A673 (cell line): ENCODE measurements at regions of chr4 and their contacts with region 1.

Region 1: DNA sequence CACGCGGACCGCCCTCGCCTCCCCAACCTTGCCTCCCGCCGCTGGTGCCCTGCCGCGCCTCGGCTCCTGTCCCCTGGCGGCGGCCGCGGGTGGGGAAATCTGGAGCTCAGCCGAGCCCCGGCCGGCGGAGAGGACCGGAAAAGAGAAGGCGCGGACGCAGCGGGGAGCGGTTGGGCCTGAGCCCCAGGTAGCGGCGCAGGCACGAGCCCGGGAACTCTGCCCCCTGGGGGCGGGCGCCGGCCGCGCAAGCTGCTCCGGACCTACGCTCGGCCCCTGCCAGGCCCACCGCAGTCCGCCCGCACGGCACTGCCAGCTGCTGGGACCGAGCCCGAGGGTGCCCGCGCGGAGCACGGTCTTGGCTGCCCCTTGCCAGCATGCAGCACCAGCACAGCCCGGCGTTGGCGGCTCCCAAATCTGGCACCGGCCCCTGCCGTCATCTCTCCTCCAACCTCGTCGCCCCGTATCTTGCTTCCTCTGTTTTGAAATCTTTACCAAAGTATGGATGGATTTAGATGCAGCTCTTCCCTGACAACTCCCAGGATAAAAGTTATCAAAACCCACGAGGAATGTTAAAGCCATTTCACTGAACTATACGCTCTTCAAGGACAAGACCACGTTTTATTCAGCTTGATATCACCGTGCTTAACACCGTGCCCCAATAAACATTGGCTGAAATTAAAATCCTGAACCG is at the start of gene PRSS12:
- DNase-seq: peak; percentile 85
- H3K4me3 ChIP-seq: peak within 1 kb of the TSS; percentile 53
- H3K27ac ChIP-seq: no peak within 1 kb of the TSS
- H3K4me1 ChIP-seq: no peaks in the 10 kb centered on the region
- H3K27me3 ChIP-seq: peaks cover 24% of the 10 kb centered on the region
- CTCF ChIP-seq: peak; percentile 67
- total RNA-seq, gene PRSS12: 3.1 and 4.7 TPM in 2 replicates

Region 2: GRCh38 chr4:118076958-118077766 is 275.8 kb before region 1 on chr4:
- CTCF ChIA-PET with region 1: no interaction called
- POLR2A ChIA-PET with region 1: no interaction called
- intact Hi-C with region 1: no loop called
- DNase-seq: peak; percentile 74
- H3K4me3 ChIP-seq: no peak overlapping the region
- H3K27ac ChIP-seq: no peak overlapping the region
- H3K4me1 ChIP-seq: peaks cover 10% of the 10 kb centered on the region
- H3K27me3 ChIP-seq: no peaks in the 10 kb centered on the region
- CTCF ChIP-seq: peak; percentile 64

Region 3: DNA sequence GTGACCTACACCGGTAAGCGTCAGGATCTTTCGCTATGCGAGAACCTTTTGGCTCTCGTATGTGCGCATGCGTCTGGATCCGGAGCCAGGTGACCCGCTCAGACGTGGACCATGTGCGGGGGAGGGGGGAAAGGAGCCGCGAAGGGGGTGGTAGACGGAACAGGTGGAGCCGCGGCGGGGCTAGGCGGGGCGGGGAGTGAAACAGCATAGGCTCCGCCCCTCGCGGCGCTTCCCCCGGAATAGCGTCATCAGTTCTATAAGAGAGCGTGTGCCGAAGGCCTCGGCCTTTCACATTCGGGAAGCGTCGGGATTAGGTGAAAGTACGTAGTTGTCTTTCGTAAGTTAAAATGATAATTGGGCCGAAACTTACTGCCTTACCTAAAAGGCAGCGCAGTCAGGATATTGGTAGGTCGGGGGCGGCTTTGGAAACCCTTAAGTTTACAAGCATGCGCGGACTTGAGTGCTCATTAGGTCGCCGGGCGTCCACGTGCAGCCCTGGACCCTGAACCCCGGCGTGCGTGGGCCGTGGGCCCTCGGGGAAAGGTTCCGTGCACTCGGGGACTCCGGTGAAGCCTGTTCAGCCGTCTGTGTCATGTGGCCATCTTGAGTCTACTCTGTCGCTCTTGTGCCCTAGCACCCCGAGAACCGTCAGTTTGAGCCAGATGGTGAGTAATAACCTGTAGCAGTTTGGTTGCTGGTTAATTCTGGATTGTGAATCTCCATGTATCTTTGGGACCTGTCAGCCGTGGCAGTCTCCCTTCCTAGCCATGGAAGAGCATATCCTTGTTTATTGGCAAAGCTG is 74.3 kb before region 1 on chr4:
- CTCF ChIA-PET with region 1: no interaction called
- POLR2A ChIA-PET with region 1: no interaction called
- intact Hi-C with region 1: loop called (anchors 5 kb)
- DNase-seq: peak; percentile 96
- H3K4me3 ChIP-seq: peak overlapping the region; percentile 83
- H3K27ac ChIP-seq: peak overlapping the region; percentile 94
- H3K4me1 ChIP-seq: peaks cover 15% of the 10 kb centered on the region
- H3K27me3 ChIP-seq: no peaks in the 10 kb centered on the region
- CTCF ChIP-seq: no peak

Region 4: DNA sequence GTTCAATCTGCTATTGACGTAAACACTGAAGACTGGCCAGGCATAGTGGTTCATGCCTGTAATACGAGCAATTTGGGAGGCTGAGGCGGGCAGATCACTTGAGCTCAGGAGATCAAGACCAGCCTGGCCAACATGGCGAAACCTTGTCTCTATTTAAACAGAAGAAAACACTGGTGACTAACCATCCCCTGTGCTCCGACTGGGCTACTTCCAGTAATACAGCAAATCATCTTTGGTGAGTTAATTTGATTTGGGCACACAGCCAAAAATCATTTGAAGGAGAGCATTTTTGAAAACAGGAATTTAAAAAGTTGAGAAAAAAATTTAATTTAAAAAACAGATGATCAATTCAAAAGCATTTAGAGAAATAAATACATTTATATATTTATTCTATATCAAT is 430.9 kb after region 1 on chr4:
- CTCF ChIA-PET with region 1: no interaction called
- POLR2A ChIA-PET with region 1: no interaction called
- intact Hi-C with region 1: no loop called
- DNase-seq: peak; percentile 22
- H3K4me3 ChIP-seq: no peak overlapping the region
- H3K27ac ChIP-seq: no peak overlapping the region
- H3K4me1 ChIP-seq: peaks cover 4% of the 10 kb centered on the region
- H3K27me3 ChIP-seq: no peaks in the 10 kb centered on the region
- CTCF ChIP-seq: no peak